Lower leg skin (tissue), 4 donors: ENCODE measurements at regions of chr10 and their contacts with region 1.

Region 1: GRCh38 chr10:124579011-124579399 is 117.4 kb downstream of the LHPP start:
- DNase-seq: no peak
- H3K4me3 ChIP-seq: no peak overlapping the region
- CTCF ChIP-seq: no peak
- POLR2A ChIP-seq: no peak

Region 2: DNA sequence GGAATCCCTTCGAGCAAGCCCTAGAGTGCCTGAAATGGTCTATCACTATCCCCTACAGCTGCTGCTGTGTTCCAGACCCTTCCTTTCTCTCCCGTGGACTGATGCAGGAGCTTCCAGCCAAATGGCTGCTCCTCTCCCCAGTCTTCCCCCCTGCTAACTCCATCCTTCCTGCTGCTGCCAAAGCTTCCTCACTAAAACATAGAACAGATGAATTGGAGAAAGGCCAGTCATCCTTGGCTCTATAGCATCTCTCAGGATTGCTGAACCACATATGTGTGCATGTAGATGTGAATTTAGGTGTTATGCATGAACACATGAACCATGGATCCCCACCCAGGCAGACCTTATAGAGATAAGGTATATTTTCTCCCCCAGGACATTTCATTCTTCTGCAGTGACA is 852.2 kb before region 1 on chr10:
- intact Hi-C with region 1: loop called (anchors 5 kb)
- DNase-seq: peak in 1 of 2 donors; percentile 64
- H3K4me3 ChIP-seq: no peak overlapping the region
- CTCF ChIP-seq: no peak
- POLR2A ChIP-seq: no peak

Region 3: GRCh38 chr10:124340033-124340760 is 238.8 kb before region 1 on chr10:
- intact Hi-C with region 1: no loop called
- DNase-seq: peak in 1 of 2 donors; percentile 59
- H3K4me3 ChIP-seq: no peak overlapping the region
- CTCF ChIP-seq: no peak
- POLR2A ChIP-seq: no peak